HepG2 (cell line): ENCODE measurements at regions of chr11 and their contacts with region 1.

Region 1: GRCh38 chr11:118488480-118489109 is 38.7 kb upstream of the TTC36 start:
- DNase-seq: peak; percentile 68
- ATAC-seq: peak; percentile 65
- H3K4me3 ChIP-seq: no peak overlapping the region
- H3K27ac ChIP-seq: no peak overlapping the region
- H3K4me1 ChIP-seq: no peaks in the 10 kb centered on the region
- H3K27me3 ChIP-seq: no peaks in the 10 kb centered on the region
- CTCF ChIP-seq: peak; percentile 85
- EP300 ChIP-seq: no peak
- POLR2A ChIP-seq: no peak
- RAD21 ChIP-seq: peak; percentile 47; the same call in 1 of the 2 replicates

Region 2: DNA sequence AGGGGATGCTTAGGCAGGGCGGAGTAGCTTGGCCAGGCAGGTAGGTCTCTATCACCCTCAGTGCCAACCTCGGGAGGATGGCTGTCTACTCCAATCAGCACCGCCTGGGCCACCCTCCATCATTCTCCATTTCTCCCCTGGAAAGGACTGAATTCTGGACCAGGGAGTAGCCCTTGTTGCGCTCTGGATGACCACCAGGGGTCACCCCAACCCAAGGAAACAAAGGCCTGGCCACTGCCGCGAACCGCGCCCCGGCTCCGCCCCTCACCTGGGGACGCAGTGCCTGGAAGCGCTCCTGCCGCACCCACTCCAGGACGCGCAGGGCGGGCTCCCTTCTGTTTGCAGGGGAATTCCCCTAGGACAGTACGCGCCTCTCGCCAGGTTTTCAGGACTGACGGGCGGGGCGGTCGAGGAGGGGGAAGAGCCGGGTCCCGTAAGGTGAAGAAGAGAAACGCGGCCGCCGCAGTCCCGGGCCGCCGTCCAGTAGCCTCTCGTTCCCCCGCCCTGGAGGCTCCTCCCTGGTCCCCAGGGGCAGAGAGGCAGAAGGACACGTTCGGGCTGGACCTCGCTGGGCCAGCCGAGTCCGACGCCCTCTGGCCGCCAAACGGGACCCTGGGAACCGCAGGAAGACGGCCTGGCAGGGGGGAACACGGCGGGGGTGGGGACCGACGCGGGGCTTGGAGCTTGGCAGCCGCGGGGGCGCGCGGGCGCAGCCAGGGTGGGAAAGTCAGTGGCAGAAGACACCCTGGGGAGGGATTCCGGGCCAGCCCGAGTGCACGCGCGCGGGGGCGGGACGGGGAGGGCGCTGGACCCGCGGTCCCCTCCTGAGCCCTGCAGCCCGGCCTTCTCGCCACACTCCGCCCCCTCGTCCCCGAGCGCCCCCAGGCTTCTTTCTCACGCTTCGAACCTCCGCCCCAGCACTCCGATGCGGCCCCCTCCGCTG is 343.0 kb before region 1 on chr11:
- CTCF ChIA-PET with region 1: interaction called, 13 read pairs
- POLR2A ChIA-PET with region 1: no interaction called
- in situ Hi-C with region 1: loop called (anchors 25 kb)
- intact Hi-C with region 1: loop called (anchors 1 kb)
- DNase-seq: peak; percentile 68
- ATAC-seq: peak; percentile 93
- H3K4me3 ChIP-seq: peak overlapping the region; percentile 60 to 80 (median 61); a peak in 5 of 6 replicates
- H3K27ac ChIP-seq: no peak overlapping the region
- H3K4me1 ChIP-seq: peaks cover 18% of the 10 kb centered on the region; the same call in 1 of the 2 replicates
- H3K27me3 ChIP-seq: peaks cover 2 to 52% of the 10 kb centered on the region in 2 experiments; a peak in 3 of 5 replicates
- CTCF ChIP-seq: peak; percentile 98
- EP300 ChIP-seq: no peak
- POLR2A ChIP-seq: no peak
- RAD21 ChIP-seq: peak; percentile 99

Region 3: DNA sequence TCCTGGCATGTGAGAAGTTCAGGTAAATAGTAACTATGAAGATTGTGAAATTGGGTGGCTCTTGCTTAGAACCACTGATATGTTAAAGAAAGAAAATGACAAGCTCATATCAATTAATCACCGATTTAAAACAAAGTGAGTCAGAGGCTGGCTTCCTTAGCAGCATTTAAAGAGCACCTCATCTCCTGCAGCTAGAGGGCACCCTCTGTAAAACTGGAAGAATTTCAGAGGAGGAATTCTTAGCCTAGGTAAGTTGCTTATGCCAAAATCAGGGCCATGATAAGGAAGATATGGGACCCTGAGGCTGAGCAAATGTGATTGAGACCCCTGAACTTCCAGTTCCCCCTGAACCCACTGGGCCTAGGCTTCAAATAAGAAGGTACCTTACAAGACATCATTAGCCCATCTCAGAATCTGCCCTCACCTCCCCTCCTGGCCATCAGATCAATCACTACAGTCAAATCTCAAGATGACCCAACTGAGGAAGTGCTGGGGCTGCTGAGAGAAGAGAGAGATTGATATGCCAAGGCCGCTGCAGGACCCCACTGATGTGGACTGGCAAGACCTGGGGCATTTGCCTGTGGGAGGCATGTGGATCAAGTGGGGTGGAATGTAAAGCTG is 192.7 kb before region 1 on chr11:
- CTCF ChIA-PET with region 1: no interaction called
- POLR2A ChIA-PET with region 1: no interaction called
- in situ Hi-C with region 1: no loop called
- intact Hi-C with region 1: loop called (anchors 5 kb)
- DNase-seq: peak; percentile 28
- ATAC-seq: peak; percentile 44; the same call in 1 of the 3 replicates
- H3K4me3 ChIP-seq: no peak overlapping the region
- H3K27ac ChIP-seq: no peak overlapping the region
- H3K4me1 ChIP-seq: peaks cover 6% of the 10 kb centered on the region
- H3K27me3 ChIP-seq: peaks cover 1 to 15% of the 10 kb centered on the region in 2 experiments; a peak in 2 of 5 replicates
- CTCF ChIP-seq: peak; percentile 67
- EP300 ChIP-seq: no peak
- POLR2A ChIP-seq: no peak
- RAD21 ChIP-seq: no peak

Region 4: DNA sequence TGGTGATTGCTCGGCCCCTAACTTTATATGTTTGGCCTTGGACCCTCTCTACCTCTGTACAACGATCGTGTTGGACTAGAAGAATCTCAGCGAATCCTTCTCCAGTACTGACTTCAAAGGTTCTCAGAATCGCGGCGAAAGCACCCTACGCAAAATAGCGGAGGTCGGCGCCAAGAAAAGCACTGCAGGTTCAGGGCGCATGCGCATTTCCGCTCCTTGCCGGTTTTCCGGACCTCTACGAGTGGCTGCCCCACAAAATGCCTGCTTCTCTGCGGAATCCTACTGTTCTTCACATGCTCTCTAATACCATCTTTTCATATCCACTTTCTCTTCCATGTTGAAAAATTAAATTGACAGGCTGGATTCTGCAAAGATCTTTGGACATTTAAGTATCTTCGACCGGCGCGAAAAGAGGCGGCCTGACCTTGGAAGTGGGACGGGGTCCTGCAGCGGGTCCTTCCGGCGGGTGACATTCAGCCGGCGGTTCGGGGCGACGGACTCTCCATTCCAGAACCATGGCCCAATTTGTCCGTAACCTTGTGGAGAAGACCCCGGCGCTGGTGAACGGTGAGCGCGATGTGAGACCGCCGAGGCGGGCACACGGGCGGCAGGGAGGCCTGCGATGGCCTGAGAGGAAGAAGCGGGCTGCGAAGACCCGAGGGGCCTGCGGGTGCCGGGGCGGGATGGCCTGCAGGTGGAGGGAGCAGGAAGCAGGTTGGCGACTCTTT is 87.3 kb before region 1 on chr11 and contains the start of gene ATP5MG:
- CTCF ChIA-PET with region 1: no interaction called
- POLR2A ChIA-PET with region 1: no interaction called
- in situ Hi-C with region 1: no loop called
- intact Hi-C with region 1: loop called (anchors 2 kb)
- DNase-seq: peak; percentile 82
- ATAC-seq: peak; percentile 83
- H3K4me3 ChIP-seq: peak within 1 kb of the TSS; percentile 91 to 97 (median 95)
- H3K27ac ChIP-seq: peak within 1 kb of the TSS; percentile 90
- H3K4me1 ChIP-seq: peaks cover 40% of the 10 kb centered on the region
- H3K27me3 ChIP-seq: no peaks in the 10 kb centered on the region; a peak in 1 of 5 replicates
- CTCF ChIP-seq: peak; percentile 16; the same call in 1 of the 2 replicates
- EP300 ChIP-seq: no peak
- POLR2A ChIP-seq: peak; percentile 75 to 76
- RAD21 ChIP-seq: no peak
- total RNA-seq, gene ATP5MG: 320 and 408 TPM in 2 replicates

Region 5: DNA sequence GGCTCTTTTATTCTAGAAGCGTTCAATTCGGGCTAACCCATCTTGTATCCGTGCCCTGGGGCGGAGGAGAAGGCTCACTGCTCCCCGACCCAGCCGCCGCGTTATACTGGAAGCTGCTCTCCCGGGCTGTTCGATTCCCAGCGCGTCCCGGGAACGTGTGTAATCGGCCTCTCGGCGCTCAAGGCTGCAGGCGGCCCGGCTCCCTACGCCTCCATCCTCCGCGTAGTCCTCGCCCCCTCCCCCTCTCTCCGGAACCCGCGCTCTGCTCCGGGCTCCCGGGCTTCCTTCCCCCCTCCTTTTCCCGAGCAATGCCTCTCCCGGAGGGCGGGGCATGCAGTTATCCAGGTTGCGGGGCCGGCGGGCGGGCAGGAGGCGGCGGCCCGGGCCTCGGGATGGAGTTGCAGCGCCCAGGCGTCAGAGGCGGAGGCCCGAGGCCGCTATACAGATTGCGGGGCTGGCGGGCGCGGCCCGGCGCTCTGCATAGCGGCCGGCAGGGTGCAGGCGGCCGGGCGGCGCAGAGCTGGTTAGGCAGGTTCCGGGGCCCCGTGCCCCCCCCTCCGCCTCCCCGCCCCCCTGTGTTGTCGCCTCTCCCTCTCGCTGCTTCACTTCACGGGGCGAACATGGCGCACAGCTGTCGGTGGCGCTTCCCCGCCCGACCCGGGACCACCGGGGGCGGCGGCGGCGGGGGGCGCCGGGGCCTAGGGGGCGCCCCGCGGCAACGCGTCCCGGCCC is 52.5 kb before region 1 on chr11 and contains the start of gene KMT2A:
- CTCF ChIA-PET with region 1: interaction called, 4 read pairs
- POLR2A ChIA-PET with region 1: interaction called, 3 read pairs
- in situ Hi-C with region 1: no loop called
- intact Hi-C with region 1: loop called (anchors 2 kb)
- DNase-seq: peak; percentile 93
- ATAC-seq: peak; percentile 75
- H3K4me3 ChIP-seq: peak within 1 kb of the TSS; percentile 90 to 97 (median 92)
- H3K27ac ChIP-seq: peak within 1 kb of the TSS; percentile 87
- H3K4me1 ChIP-seq: peaks cover 53% of the 10 kb centered on the region
- H3K27me3 ChIP-seq: no peaks in the 10 kb centered on the region
- CTCF ChIP-seq: no peak
- EP300 ChIP-seq: peak in 1 of 2 experiments; percentile 26; a peak in 1 of 4 replicates
- POLR2A ChIP-seq: peak; percentile 14 to 83; a peak in 2 of 4 replicates
- RAD21 ChIP-seq: peak; percentile 48
- total RNA-seq, gene KMT2A: 20.0 and 26.2 TPM in 2 replicates

Region 6: DNA sequence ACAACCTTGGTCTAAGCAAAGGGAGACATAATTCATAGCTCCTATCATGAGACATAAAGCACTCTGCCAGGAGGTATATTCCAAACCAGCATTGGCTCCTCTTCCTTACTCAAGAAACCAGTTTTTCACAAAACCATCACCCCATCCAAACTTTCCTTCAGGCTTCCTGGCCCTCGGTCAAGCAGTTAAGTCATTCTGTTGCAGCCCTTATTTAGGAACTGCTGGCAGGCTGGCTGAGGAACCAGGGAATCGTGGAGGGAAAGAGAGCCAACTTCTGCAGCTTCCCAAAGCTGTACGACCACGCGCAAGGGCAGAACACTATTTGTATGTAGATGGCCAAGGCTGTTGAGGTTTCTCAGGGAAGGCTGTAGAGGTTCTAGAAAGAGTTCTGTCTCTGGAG is 76.5 kb after region 1 on chr11:
- CTCF ChIA-PET with region 1: no interaction called
- POLR2A ChIA-PET with region 1: no interaction called
- in situ Hi-C with region 1: no loop called
- intact Hi-C with region 1: loop called (anchors 10 kb)
- DNase-seq: no peak
- ATAC-seq: no peak
- H3K4me3 ChIP-seq: no peak overlapping the region
- H3K27ac ChIP-seq: no peak overlapping the region
- H3K4me1 ChIP-seq: peaks cover 22% of the 10 kb centered on the region
- H3K27me3 ChIP-seq: no peaks in the 10 kb centered on the region; a peak in 1 of 5 replicates
- CTCF ChIP-seq: no peak
- EP300 ChIP-seq: no peak
- POLR2A ChIP-seq: no peak
- RAD21 ChIP-seq: no peak